HAP-1 (cell line): ENCODE measurements at regions of chr18 and their contacts with region 1.

Region 1: GRCh38 chr18:46481048-46481846 is 175.8 kb downstream of the LOXHD1 start:
- DNase-seq: peak; percentile 46 to 75
- H3K4me3 ChIP-seq: no peak overlapping the region
- H3K4me1 ChIP-seq: no peaks in the 10 kb centered on the region
- H3K27me3 ChIP-seq: peaks cover 1% of the 10 kb centered on the region; the same call in 1 of the 2 replicates

Region 2: DNA sequence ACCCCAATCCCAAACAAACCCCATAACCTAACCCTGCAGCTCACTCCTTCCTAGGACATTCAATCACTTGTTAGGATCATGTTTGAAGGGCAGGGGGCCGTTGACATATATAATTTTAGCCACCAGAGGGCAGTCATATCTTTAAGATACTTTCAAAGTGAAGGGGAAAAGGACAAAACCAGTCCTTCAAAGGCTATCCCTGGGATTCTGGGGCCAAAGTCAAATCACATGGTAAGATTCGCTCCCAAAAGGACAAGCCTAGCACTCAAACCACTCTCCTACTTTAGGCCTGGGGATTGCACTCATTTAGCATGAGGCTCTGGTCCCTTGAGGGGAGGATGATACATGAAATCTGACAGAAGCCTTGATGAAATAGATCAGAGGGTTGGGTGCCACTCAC is 332.4 kb before region 1 on chr18:
- in situ Hi-C with region 1: loop called (anchors 10 kb)
- DNase-seq: peak; percentile 72 to 74
- H3K4me3 ChIP-seq: no peak overlapping the region
- H3K4me1 ChIP-seq: no peaks in the 10 kb centered on the region
- H3K27me3 ChIP-seq: no peaks in the 10 kb centered on the region

Region 3: DNA sequence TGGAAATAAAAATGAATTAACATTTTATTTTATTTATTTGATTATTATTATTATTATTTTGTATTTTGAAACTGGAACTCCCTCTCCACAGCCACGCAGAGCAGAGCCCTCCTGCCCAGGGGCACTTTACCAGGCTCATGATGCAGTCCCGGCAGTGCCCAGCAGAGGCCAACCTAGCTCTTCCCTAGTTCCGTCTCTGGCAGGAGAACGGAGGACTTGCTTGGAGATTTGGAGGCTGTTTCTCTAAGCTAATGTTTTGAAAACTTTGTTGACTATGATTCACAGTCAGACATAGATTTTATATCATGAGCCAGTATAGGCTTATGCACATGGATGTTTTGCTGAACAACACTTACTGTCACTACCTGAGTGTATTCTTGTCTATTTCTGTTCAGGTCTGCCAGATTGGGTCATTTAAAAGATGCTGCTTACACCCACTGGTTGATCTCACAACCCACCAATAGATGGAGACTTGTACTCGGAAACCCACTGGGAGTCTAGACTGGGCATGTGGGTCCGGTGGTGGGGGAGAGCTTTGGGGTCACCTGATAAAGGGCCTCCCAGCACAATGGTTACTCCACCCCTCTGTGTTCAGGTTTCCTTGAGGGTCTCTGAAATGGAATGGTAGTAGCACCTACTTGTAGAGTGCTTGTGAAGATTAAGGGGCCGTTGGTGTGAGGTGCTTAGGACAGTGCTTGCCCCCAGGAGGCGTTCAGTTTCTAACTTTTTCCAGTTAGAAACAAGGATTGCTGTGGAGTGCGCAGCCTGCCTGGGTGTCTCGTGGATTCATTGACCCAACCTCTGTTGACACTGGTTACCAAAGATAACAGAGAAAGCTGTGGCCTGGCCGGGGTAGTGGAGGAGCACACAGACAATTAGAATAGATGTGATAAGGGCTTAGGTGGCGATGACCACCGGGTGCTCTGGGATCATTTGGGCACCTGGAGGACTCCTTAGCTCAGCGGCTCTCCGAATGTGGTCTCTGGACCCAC is 199.8 kb before region 1 on chr18:
- in situ Hi-C with region 1: loop called (anchors 10 kb)
- DNase-seq: peak; percentile 81 to 85
- H3K4me3 ChIP-seq: no peak overlapping the region
- H3K4me1 ChIP-seq: no peaks in the 10 kb centered on the region
- H3K27me3 ChIP-seq: no peaks in the 10 kb centered on the region